ENCODE measurements at regions of chr10 and their contacts with region 1.

Region 1: GRCh38 chr10:5094265-5095205 is at the start of gene AKR1C3:
- DNase-seq: peak; percentile 80
- H3K4me3 ChIP-seq: peak within 1 kb of the TSS; percentile 57 to 67 (median 60)
- H3K27ac ChIP-seq: peak within 1 kb of the TSS; percentile 80
- H3K4me1 ChIP-seq: peaks cover 18% of the 10 kb centered on the region
- H3K27me3 ChIP-seq: no peaks in the 10 kb centered on the region
- CTCF ChIP-seq: peak; percentile 66 to 75
- total RNA-seq, gene AKR1C3: 18.8 to 50.7 TPM

Region 2: DNA sequence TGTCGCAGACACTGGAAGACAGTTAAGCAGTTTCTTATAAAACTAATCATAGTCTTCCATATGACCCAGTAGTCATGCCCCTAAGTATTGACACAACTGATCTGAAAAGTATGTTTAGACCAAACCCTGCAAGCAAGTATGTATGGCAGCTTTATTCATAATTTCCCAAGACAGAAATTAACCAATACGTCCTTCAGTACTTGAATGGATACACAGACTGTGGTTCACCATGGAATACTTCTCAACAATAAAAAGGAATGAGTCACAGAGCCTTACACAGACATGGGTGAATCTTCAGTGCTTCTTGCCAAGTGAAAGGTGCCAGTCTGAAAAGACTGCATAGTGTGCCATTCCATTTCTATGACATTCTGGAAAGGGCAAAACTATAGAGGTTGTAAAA is 318.7 kb before region 1 on chr10:
- CTCF ChIA-PET with region 1: no interaction called
- dilution Hi-C with region 1: no loop called
- in situ Hi-C with region 1: no loop called
- intact Hi-C with region 1: no loop called
- DNase-seq: peak; percentile 94
- H3K4me3 ChIP-seq: no peak overlapping the region
- H3K27ac ChIP-seq: peak overlapping the region; percentile 83
- H3K4me1 ChIP-seq: peaks cover 36% of the 10 kb centered on the region
- H3K27me3 ChIP-seq: no peaks in the 10 kb centered on the region
- CTCF ChIP-seq: no peak

Region 3: GRCh38 chr10:5014936-5015335 is 79.6 kb before region 1 on chr10:
- CTCF ChIA-PET with region 1: no interaction called
- dilution Hi-C with region 1: no loop called
- in situ Hi-C with region 1: no loop called
- intact Hi-C with region 1: loop called (anchors 1 kb)
- DNase-seq: no peak
- H3K4me3 ChIP-seq: no peak overlapping the region
- H3K27ac ChIP-seq: no peak overlapping the region
- H3K4me1 ChIP-seq: peaks cover 12% of the 10 kb centered on the region
- H3K27me3 ChIP-seq: no peaks in the 10 kb centered on the region
- CTCF ChIP-seq: peak; percentile 16 to 43

Region 4: GRCh38 chr10:5147255-5147980 is 52.9 kb after region 1 on chr10:
- CTCF ChIA-PET with region 1: no interaction called
- dilution Hi-C with region 1: loop called (anchors 5 kb)
- in situ Hi-C with region 1: no loop called
- intact Hi-C with region 1: no loop called
- DNase-seq: no peak
- H3K4me3 ChIP-seq: no peak overlapping the region
- H3K27ac ChIP-seq: no peak overlapping the region
- H3K4me1 ChIP-seq: no peaks in the 10 kb centered on the region
- H3K27me3 ChIP-seq: no peaks in the 10 kb centered on the region
- CTCF ChIP-seq: no peak

Region 5: DNA sequence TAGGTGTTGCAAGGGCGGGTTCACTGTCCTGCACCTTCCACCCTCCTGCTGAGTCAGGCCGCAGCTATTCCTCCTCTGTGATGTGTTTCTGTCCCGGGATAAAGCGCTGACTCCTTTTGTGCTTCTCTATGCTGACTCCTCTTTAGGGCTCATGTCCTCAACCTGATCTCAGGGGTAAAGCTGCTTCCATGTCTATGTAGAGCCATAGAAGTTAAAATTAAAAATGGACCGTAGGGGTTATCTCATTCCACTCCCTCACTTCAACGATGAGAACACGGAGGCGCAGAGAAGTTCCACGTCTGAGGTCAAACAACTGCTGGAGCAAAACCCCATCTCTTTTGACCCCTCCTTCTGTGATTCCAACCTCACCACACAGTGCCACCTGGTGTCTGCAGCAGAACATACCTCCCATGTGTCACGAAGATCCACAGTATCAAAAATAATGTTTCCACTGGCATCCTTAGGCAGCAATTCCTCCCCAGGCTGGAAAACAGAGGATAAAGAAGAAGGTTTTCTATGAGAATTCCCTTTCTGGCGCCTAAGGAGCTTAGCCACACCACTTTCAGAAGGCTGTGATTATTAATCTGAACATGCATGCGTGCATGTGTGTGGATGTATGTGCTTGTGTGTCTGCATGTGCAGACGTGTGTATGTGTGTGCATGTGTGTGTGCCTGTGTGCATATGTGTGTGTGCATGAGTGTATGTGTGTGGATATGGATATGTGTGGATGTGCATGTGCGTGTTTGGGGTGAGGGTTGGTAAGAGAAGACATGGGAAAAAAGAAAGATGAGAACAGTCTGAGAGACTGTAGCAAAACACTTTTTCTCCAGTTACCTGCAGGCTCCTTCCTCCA is 189.0 kb after region 1 on chr10:
- CTCF ChIA-PET with region 1: no interaction called
- dilution Hi-C with region 1: no loop called
- in situ Hi-C with region 1: no loop called
- intact Hi-C with region 1: loop called (anchors 2 kb)
- DNase-seq: peak; percentile 64
- H3K4me3 ChIP-seq: no peak overlapping the region
- H3K27ac ChIP-seq: no peak overlapping the region
- H3K4me1 ChIP-seq: peaks cover 9% of the 10 kb centered on the region
- H3K27me3 ChIP-seq: no peaks in the 10 kb centered on the region
- CTCF ChIP-seq: peak; percentile 71 to 85

Region 6: GRCh38 chr10:5385224-5385623 is 290.7 kb after region 1 on chr10:
- CTCF ChIA-PET with region 1: no interaction called
- dilution Hi-C with region 1: no loop called
- in situ Hi-C with region 1: no loop called
- intact Hi-C with region 1: loop called (anchors 1 kb)
- DNase-seq: no peak
- H3K4me3 ChIP-seq: no peak overlapping the region
- H3K27ac ChIP-seq: no peak overlapping the region
- H3K4me1 ChIP-seq: no peaks in the 10 kb centered on the region
- H3K27me3 ChIP-seq: no peaks in the 10 kb centered on the region
- CTCF ChIP-seq: no peak